ENCODE measurements at regions of chr11 and their contacts with region 1.

Region 1: DNA sequence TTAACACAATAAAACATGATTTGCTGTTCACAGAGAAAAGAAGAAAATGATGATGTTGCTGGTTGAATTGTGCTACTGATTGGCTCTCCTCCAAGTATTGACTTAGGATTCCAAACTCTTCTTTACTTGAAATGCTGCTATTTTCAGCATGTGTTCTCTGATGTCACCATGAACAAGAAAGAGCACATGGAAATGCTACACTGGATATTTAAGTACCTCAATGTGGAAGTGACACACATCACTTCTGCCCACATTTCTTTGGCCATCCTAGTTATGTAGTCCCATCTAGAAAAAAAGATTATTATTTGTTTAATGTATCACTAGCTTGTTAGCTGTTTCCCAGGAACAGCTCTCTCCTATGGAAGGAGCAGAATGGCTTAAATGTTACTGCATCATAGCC is 27.2 kb downstream of the OR52B2 start:
- DNase-seq: no peak
- ATAC-seq: no peak
- H3K4me3 ChIP-seq: no peak overlapping the region
- H3K27ac ChIP-seq: no peak overlapping the region
- H3K4me1 ChIP-seq: no peaks in the 10 kb centered on the region
- H3K27me3 ChIP-seq: no peaks in the 10 kb centered on the region
- CTCF ChIP-seq: no peak

Region 2: DNA sequence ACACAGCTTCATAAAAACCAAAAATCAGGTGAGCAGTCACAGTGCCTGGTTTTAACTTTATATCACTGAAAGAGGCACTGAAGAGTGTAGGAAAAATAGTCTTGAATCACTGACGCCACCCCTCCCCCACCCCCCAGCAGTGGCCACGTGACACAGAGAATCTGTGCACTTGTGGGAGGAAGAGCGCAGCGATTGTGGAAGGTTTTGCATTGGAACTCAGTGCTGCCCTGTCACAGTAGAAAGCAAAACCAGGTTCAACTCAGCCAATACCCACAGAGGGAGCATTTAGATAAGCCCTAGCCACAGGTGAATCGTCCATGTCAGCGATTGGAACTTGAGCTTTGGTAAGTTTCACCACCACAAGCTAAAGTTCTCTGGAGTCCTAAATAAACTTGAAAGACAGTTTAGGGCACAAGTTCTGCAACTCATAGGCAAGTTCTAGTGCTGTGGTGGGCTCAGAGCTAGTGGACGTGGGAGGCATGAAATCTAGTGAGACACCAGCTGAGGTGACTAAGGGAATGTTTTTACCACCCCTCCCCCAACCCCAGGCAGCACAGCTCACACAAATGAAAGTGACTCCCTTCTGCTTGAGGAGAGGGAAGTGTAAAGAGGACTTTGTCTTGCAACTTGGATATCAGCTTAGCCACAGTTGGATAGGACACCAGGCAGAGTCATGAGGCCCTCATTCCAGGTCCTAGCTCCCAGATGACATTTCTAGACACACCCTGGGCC is 13.9 kb after region 1 on chr11:
- intact Hi-C with region 1: loop called in 1 of 10 experiments (anchors 2 kb)
- DNase-seq: no peak
- ATAC-seq: no peak
- H3K4me3 ChIP-seq: no peak overlapping the region
- H3K27ac ChIP-seq: no peak overlapping the region
- H3K4me1 ChIP-seq: no peaks in the 10 kb centered on the region
- H3K27me3 ChIP-seq: no peaks in the 10 kb centered on the region
- CTCF ChIP-seq: no peak

Measured in heart right ventricle (tissue), 16 donors.